ENCODE measurements at regions of chr11 and their contacts with region 1.

Region 1: GRCh38 chr11:62671575-62672389 is at the starts of genes LBHD1 and UQCC3:
- DNase-seq: peak; percentile 50 to 89 (median 68)
- ATAC-seq: peak; percentile 74
- H3K4me3 ChIP-seq: peak within 1 kb of the TSS; percentile 98
- H3K4me3 Mint-ChIP-seq: peak within 1 kb of the TSS; percentile 91
- H3K27ac ChIP-seq: peak within 1 kb of the TSS; percentile 72 to 83
- H3K27ac Mint-ChIP-seq: peak within 1 kb of the TSS; percentile 87
- H3K4me1 ChIP-seq: peaks cover 55% of the 10 kb centered on the region
- H3K4me1 Mint-ChIP-seq: peaks cover 53% of the 10 kb centered on the region
- H3K27me3 ChIP-seq: no peaks in the 10 kb centered on the region
- H3K27me3 Mint-ChIP-seq: no peaks in the 10 kb centered on the region
- CTCF ChIP-seq: no peak
- total RNA-seq, gene LBHD1: 10.4 to 10.5 TPM
- total RNA-seq, gene UQCC3: 1.5 to 2.3 TPM

Region 2: GRCh38 chr11:62104816-62105653 is 566.7 kb before region 1 on chr11:
- CTCF ChIA-PET with region 1: no interaction called
- POLR2A ChIA-PET with region 1: no interaction called
- intact Hi-C with region 1: no loop called
- DNase-seq: peak in 3 of 14 experiments; percentile 47 to 69 (median 56)
- ATAC-seq: peak; percentile 57
- H3K4me3 ChIP-seq: peak overlapping the region; percentile 40
- H3K4me3 Mint-ChIP-seq: peak overlapping the region; percentile 85
- H3K27ac ChIP-seq: peak overlapping the region; percentile 21 to 50
- H3K27ac Mint-ChIP-seq: peak overlapping the region; percentile 54
- H3K4me1 ChIP-seq: peaks cover 15% of the 10 kb centered on the region
- H3K4me1 Mint-ChIP-seq: peaks cover 11% of the 10 kb centered on the region
- H3K27me3 ChIP-seq: no peaks in the 10 kb centered on the region
- H3K27me3 Mint-ChIP-seq: no peaks in the 10 kb centered on the region
- CTCF ChIP-seq: no peak

Region 3: DNA sequence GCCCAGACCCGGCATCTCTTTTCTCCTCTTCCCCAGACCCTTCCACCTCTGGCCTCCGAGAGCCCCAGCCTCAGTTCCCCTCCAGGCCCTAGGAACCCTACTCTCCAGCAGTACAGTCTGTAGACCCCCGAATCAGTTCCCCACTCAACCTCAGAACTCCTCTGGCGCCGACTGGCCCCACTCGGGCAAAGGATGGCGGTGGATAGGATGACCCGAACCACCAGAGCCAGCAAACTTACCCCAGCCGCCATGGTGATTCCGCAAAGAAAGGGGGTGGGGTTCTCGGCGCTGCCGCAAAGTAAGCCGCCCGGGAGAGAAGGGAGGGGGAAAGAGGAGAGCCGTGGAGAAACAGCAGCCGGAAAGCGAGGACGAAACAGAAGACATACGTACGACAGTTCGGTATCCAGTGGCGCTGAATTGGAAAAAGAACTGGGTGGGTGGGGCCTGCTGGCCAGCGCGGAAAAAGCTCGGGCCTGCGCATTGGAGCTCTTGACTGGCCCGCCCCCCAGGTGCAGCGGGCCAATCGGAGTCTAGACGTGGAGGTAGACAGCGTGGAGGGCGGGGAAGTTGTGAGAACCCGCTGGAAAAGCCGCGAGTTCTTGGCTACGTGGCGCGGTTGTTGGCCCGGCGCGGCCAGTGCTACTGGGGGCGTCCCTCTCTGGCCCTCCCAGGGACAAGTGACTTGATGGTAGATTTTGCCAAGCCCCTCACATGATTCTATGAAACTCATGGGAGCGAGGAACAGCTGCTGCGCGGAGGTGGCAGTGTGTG is 98.0 kb before region 1 on chr11 and contains the start of gene EEF1G:
- CTCF ChIA-PET with region 1: no interaction called
- POLR2A ChIA-PET with region 1: interaction called, 16 read pairs
- intact Hi-C with region 1: no loop called
- DNase-seq: peak; percentile 95 to 100 (median 97)
- ATAC-seq: peak; percentile 94
- H3K4me3 ChIP-seq: peak within 1 kb of the TSS; percentile 82
- H3K4me3 Mint-ChIP-seq: peak within 1 kb of the TSS; percentile 93
- H3K27ac ChIP-seq: peak within 1 kb of the TSS; percentile 76 to 83
- H3K27ac Mint-ChIP-seq: peak within 1 kb of the TSS; percentile 89
- H3K4me1 ChIP-seq: peaks cover 48% of the 10 kb centered on the region
- H3K4me1 Mint-ChIP-seq: peaks cover 55% of the 10 kb centered on the region
- H3K27me3 ChIP-seq: no peaks in the 10 kb centered on the region
- H3K27me3 Mint-ChIP-seq: no peaks in the 10 kb centered on the region
- CTCF ChIP-seq: no peak
- total RNA-seq, gene EEF1G: 2,181 to 2,269 TPM

Region 4: GRCh38 chr11:62621567-62622470 is 50.0 kb before region 1 on chr11 and contains the start of gene B3GAT3:
- CTCF ChIA-PET with region 1: interaction called, 3 read pairs
- POLR2A ChIA-PET with region 1: interaction called, 17 read pairs
- intact Hi-C with region 1: loop called in 1 of 2 experiments (anchors 5 kb)
- DNase-seq: peak; percentile 91 to 99 (median 95)
- ATAC-seq: peak; percentile 82
- H3K4me3 ChIP-seq: peak within 1 kb of the TSS; percentile 69
- H3K4me3 Mint-ChIP-seq: peak within 1 kb of the TSS; percentile 95
- H3K27ac ChIP-seq: peak within 1 kb of the TSS; percentile 86 to 88
- H3K27ac Mint-ChIP-seq: peak within 1 kb of the TSS; percentile 89
- H3K4me1 ChIP-seq: peaks cover 32% of the 10 kb centered on the region
- H3K4me1 Mint-ChIP-seq: peaks cover 27% of the 10 kb centered on the region
- H3K27me3 ChIP-seq: no peaks in the 10 kb centered on the region
- H3K27me3 Mint-ChIP-seq: no peaks in the 10 kb centered on the region
- CTCF ChIP-seq: no peak
- total RNA-seq, gene B3GAT3: 47.2 to 49.5 TPM

Region 5: DNA sequence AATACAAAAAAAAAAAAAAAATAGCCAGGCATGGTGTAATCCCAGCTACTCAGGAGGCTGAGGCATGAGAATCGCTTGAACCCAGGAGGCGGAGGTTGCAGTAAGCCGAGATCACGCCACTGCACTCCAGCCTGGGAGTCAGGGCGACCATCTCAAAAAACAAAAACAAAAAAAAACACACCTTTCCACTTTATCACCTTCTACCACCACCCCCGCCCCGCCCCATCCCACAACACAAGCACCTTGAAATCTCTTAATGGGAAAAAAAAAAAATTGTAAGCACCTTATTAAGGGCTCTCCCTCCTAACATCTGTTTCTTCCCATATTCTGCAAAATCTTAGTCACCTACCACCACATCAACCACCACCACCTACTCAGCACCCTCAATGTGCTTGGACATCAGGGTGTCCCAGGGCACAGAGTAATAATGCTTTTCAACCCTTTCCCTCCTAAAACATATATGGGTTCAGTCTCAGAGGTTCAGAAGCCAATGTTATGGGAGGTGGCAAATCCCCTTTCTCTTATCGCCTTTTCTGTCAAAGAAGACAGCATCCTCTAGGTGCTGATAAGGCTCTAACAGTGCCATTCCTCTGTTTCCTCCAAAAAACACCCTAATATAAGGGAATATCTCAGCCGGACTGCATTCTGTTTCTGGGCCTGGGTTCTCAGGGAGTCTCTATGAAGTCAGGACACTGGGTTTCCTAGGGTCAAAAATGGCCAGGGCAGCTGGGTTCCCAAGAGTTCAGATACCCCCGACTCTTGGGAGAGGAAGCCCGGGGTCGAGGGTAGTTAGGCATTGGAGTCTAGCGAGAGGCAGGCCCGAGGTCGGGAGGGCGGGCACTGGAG is 19.4 kb before region 1 on chr11:
- CTCF ChIA-PET with region 1: interaction called, 3 read pairs
- POLR2A ChIA-PET with region 1: interaction called, 170 read pairs
- intact Hi-C with region 1: loop called (anchors 1 to 2 kb)
- DNase-seq: peak in 4 of 14 experiments; percentile 43 to 62 (median 51)
- ATAC-seq: peak; percentile 5
- H3K4me3 ChIP-seq: peak overlapping the region; percentile 96
- H3K4me3 Mint-ChIP-seq: peak overlapping the region; percentile 94
- H3K27ac ChIP-seq: peak overlapping the region; percentile 89 to 94
- H3K27ac Mint-ChIP-seq: peak overlapping the region; percentile 97
- H3K4me1 ChIP-seq: peaks cover 28% of the 10 kb centered on the region
- H3K4me1 Mint-ChIP-seq: peaks cover 17% of the 10 kb centered on the region
- H3K27me3 ChIP-seq: no peaks in the 10 kb centered on the region
- H3K27me3 Mint-ChIP-seq: no peaks in the 10 kb centered on the region
- CTCF ChIP-seq: no peak

Region 6: DNA sequence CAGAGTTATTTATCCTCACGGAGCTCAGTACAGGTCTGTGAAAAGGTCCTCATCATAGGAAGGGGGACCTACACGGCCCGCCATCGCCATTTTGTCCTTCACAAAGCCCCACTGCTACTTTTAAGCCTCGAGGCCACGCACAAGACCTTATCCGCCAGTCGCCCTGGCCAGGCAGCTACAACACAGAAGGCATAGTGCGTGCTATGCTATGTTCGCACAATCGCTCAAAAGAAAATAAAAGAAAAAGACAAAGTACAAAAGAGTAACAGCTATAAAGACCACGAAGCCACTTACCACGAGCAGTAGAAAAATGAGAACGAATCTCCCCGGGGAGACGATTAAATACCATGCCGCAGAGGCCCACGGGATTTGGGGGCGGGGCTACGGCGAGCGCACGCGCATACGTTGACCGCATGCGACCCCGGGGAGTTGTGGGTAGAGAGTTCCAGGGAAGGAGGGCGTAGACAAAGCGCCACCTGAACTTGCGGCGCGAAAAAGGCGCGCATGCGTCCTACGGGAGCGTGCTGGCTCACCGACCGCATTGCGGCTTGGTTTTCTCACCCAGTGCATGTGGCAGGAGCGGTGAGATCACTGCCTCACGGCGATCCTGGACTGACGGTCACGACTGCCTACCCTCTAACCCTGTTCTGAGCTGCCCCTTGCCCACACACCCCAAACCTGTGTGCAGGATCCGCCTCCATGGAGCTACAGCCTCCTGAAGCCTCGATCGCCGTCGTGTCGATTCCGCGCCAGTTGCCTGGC is 184.0 kb after region 1 on chr11:
- CTCF ChIA-PET with region 1: no interaction called
- POLR2A ChIA-PET with region 1: interaction called, 11 read pairs
- intact Hi-C with region 1: no loop called
- DNase-seq: peak; percentile 96 to 99 (median 98)
- ATAC-seq: peak; percentile 92
- H3K4me3 ChIP-seq: peak overlapping the region; percentile 79
- H3K4me3 Mint-ChIP-seq: peak overlapping the region; percentile 98
- H3K27ac ChIP-seq: peak overlapping the region; percentile 66 to 72
- H3K27ac Mint-ChIP-seq: peak overlapping the region; percentile 90
- H3K4me1 ChIP-seq: peaks cover 41% of the 10 kb centered on the region
- H3K4me1 Mint-ChIP-seq: peaks cover 63% of the 10 kb centered on the region
- H3K27me3 ChIP-seq: no peaks in the 10 kb centered on the region
- H3K27me3 Mint-ChIP-seq: no peaks in the 10 kb centered on the region
- CTCF ChIP-seq: no peak

Region 7: GRCh38 chr11:63551091-63551888 is 879.5 kb after region 1 on chr11:
- CTCF ChIA-PET with region 1: no interaction called
- POLR2A ChIA-PET with region 1: no interaction called
- intact Hi-C with region 1: no loop called
- DNase-seq: peak in 4 of 14 experiments; percentile 13 to 59 (median 39)
- ATAC-seq: no peak
- H3K4me3 ChIP-seq: peak overlapping the region; percentile 45
- H3K4me3 Mint-ChIP-seq: peak overlapping the region; percentile 87
- H3K27ac ChIP-seq: peak overlapping the region in 1 of 2 donors; percentile 34
- H3K27ac Mint-ChIP-seq: peak overlapping the region; percentile 89
- H3K4me1 ChIP-seq: peaks cover 41% of the 10 kb centered on the region
- H3K4me1 Mint-ChIP-seq: peaks cover 58% of the 10 kb centered on the region
- H3K27me3 ChIP-seq: no peaks in the 10 kb centered on the region
- H3K27me3 Mint-ChIP-seq: no peaks in the 10 kb centered on the region
- CTCF ChIP-seq: no peak